Heart left ventricle (tissue), 16 donors: ENCODE measurements at regions of chr2 and their contacts with region 1.

Region 1: GRCh38 chr2:1446301-1446700 is 33.0 kb downstream of the TPO start:
- DNase-seq: no peak
- ATAC-seq: no peak
- H3K4me3 ChIP-seq: no peak overlapping the region
- H3K27ac ChIP-seq: no peak overlapping the region
- H3K4me1 ChIP-seq: no peaks in the 10 kb centered on the region
- H3K27me3 ChIP-seq: peaks cover 0 to 19% (median 0%) of the 10 kb centered on the region in 9 donors
- CTCF ChIP-seq: no peak
- POLR2A ChIP-seq: no peak

Region 2: GRCh38 chr2:1527153-1527992 is 81.1 kb after region 1 on chr2:
- intact Hi-C with region 1: loop called in 1 of 10 experiments (anchors 10 kb)
- DNase-seq: no peak
- ATAC-seq: no peak
- H3K4me3 ChIP-seq: no peak overlapping the region
- H3K27ac ChIP-seq: no peak overlapping the region
- H3K4me1 ChIP-seq: no peaks in the 10 kb centered on the region
- H3K27me3 ChIP-seq: no peaks in the 10 kb centered on the region
- CTCF ChIP-seq: no peak
- POLR2A ChIP-seq: no peak

Region 3: DNA sequence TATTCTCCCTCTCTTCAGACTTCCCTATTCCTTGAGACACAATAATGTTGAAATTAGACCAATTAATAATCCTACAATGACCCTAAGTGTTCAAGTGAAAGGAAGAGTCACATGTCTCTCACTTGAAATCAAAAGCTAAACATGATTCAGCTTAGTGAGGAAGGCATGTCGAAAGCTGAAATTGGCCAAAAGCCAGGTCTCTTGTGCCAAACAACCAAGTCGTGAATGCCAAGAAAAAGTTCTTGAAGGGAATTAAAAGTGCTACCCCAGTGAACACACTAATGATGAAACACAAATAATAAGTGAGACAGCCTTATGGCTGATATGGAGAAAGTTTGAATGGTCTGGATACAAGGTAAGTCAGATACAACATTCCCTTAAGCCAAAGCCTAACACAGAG is 182.6 kb after region 1 on chr2:
- intact Hi-C with region 1: no loop called
- DNase-seq: peak in 1 of 5 donors; percentile 44
- ATAC-seq: peak in 2 of 4 donors; percentile 30
- H3K4me3 ChIP-seq: no peak overlapping the region
- H3K27ac ChIP-seq: no peak overlapping the region
- H3K4me1 ChIP-seq: peaks cover 0 to 36% (median 13%) of the 10 kb centered on the region in 12 donors
- H3K27me3 ChIP-seq: peaks cover 0 to 7% (median 0%) of the 10 kb centered on the region in 9 donors
- CTCF ChIP-seq: no peak
- POLR2A ChIP-seq: no peak